A673 (cell line): ENCODE measurements at regions of chr14 and their contacts with region 1.

Region 1: DNA sequence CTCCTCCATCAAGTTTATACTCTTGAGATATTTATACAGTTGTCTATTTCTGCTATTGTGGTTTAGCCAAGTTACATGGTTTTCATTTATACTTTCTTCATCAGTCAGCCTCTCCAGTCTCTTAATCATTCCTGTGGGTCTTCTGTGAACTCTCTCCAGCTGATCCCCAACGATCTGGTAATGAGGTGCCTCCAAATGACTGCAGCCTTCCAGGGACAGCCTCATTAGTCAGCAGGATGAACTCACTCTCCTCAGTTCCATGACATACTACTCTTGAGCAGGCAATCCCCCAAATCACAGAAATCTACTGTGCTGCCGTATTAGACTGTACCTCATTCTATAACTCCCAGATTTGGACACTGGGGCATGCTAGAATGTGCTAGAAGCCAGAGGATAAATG is 15.3 kb downstream of the AREL1 start:
- DNase-seq: no peak
- H3K4me3 ChIP-seq: no peak overlapping the region
- H3K27ac ChIP-seq: no peak overlapping the region
- H3K4me1 ChIP-seq: no peaks in the 10 kb centered on the region
- H3K27me3 ChIP-seq: no peaks in the 10 kb centered on the region
- CTCF ChIP-seq: no peak

Region 2: DNA sequence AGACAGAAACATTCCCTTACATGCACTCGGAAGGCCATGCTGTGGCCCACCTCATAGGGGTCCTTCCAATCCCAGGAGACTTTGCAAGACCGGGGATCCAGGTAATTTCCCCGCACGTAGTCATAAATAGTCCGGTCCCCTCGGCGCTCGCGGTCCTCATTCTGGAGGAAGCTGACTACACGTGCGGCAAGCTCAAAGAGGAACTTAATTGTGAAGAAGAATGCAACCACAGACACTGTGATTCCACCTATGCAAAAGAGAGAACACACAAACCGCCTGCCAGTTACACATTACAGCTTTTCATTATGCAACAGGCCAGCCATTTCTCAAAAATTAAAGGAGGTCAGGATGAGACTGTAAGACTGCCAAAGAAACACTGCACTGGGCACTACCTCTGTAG is 13.1 kb before region 1 on chr14:
- CTCF ChIA-PET with region 1: no interaction called
- POLR2A ChIA-PET with region 1: interaction called, 14 read pairs
- intact Hi-C with region 1: no loop called
- DNase-seq: no peak
- H3K4me3 ChIP-seq: no peak overlapping the region
- H3K27ac ChIP-seq: no peak overlapping the region
- H3K4me1 ChIP-seq: no peaks in the 10 kb centered on the region
- H3K27me3 ChIP-seq: no peaks in the 10 kb centered on the region
- CTCF ChIP-seq: no peak